ENCODE measurements at regions of chr10 and their contacts with region 1.

Region 1: DNA sequence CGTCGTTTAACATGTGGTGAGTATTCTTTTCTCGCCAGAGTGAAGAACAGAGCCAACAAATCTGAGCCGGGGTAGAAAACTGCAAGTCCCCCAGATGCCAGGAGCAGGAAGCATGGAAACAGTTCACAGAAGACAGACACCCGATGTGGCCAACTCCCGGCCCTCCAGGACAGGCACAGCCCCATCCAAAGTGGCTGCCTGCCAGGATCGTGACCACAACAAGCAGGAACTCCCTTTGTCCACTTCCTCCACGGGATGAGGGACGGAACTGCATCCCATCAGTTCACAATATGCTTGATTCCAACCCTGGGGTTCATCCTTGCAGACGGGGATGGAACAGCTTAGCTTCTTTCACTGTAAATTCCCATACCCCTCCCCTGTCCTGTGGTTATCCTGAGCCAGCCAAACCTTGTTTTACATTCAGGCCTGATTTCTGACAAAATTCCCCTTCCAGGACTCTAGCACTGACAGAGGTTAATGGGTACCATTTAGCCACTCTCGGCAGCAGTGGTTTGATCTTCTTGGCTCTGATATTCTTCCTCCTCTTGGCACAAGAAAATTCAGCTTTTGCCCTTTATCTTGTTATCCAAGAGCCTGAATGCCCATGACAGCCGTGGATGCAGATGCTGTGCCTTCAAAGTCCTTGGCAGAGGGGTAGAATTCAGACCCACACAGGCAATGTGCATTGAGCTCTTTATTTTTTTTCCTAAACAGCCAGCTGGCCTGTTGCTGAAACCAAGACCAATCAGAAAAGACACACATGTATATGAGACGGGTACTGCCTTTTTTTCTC is 105.5 kb upstream of the FAM204A start:
- DNase-seq: no peak
- H3K4me3 ChIP-seq: no peak overlapping the region
- CTCF ChIP-seq: no peak

Region 2: GRCh38 chr10:118358327-118358726 is 89.3 kb before region 1 on chr10:
- CTCF ChIA-PET with region 1: no interaction called
- POLR2A ChIA-PET with region 1: no interaction called
- DNase-seq: no peak
- H3K4me3 ChIP-seq: no peak overlapping the region
- CTCF ChIP-seq: no peak

Region 3: GRCh38 chr10:118459726-118460193 is 12.1 kb after region 1 on chr10:
- CTCF ChIA-PET with region 1: interaction called, 18 read pairs
- POLR2A ChIA-PET with region 1: no interaction called
- DNase-seq: peak; percentile 4
- H3K4me3 ChIP-seq: no peak overlapping the region
- CTCF ChIP-seq: peak; percentile 72

Measured in AG04449 (cell line).